HepG2 (cell line): ENCODE measurements at regions of chr1 and their contacts with region 1.

Region 1: GRCh38 chr1:243325305-243325890 is 69.6 kb downstream of the SDCCAG8 start:
- DNase-seq: peak; percentile 39
- ATAC-seq: 0 out of 3 replicates have a peak, but pooled peaks have one; percentile 25
- H3K4me3 ChIP-seq: no peak overlapping the region
- H3K27ac ChIP-seq: no peak overlapping the region
- H3K4me1 ChIP-seq: no peaks in the 10 kb centered on the region
- H3K27me3 ChIP-seq: no peaks in the 10 kb centered on the region
- CTCF ChIP-seq: peak; percentile 67
- EP300 ChIP-seq: no peak
- POLR2A ChIP-seq: no peak
- RAD21 ChIP-seq: peak; percentile 44; the same call in 1 of the 2 replicates

Region 2: DNA sequence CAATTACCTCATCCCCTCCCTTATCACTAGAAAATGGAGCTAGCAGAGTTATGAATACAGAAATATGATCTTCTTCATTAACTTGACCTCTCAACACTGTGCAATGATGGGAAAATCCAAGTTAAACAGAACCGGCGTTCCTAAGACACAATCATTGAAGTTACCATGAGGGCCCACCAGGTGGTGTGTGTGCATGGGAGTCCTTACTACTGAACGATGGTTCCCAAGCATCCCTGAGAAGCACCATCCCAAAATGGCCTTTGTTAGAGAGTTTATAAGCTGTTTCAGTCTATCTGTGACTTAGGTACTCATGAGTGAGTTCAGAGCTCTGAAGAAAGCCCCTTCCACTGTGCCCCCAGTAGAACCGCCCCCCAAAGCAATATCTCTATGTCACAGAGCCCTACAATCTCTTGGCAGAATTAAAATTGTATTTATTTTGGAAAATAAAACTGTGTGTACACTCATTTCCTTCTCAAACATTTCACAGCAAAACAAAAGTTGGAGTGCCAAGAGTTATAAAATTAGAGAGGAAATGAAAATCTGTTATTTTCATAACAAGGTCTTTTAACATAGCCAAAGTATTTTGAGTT is 857.7 kb before region 1 on chr1:
- CTCF ChIA-PET with region 1: interaction called, 8 read pairs
- POLR2A ChIA-PET with region 1: no interaction called
- in situ Hi-C with region 1: loop called (anchors 25 kb)
- intact Hi-C with region 1: loop called (anchors 1 kb)
- DNase-seq: peak; percentile 29
- ATAC-seq: peak; percentile 85
- H3K4me3 ChIP-seq: no peak overlapping the region
- H3K27ac ChIP-seq: no peak overlapping the region
- H3K4me1 ChIP-seq: no peaks in the 10 kb centered on the region
- H3K27me3 ChIP-seq: no peaks in the 10 kb centered on the region; a peak in 2 of 5 replicates
- CTCF ChIP-seq: peak; percentile 69
- EP300 ChIP-seq: no peak
- POLR2A ChIP-seq: no peak
- RAD21 ChIP-seq: no peak

Region 3: GRCh38 chr1:243301059-243301458 is 24.3 kb before region 1 on chr1:
- CTCF ChIA-PET with region 1: no interaction called
- POLR2A ChIA-PET with region 1: no interaction called
- in situ Hi-C with region 1: no loop called
- intact Hi-C with region 1: no loop called
- DNase-seq: no peak
- ATAC-seq: no peak
- H3K4me3 ChIP-seq: no peak overlapping the region
- H3K27ac ChIP-seq: no peak overlapping the region
- H3K4me1 ChIP-seq: no peaks in the 10 kb centered on the region
- H3K27me3 ChIP-seq: no peaks in the 10 kb centered on the region
- CTCF ChIP-seq: no peak
- EP300 ChIP-seq: no peak
- POLR2A ChIP-seq: no peak
- RAD21 ChIP-seq: no peak